ENCODE measurements at regions of chr16 and their contacts with region 1.

Region 1: DNA sequence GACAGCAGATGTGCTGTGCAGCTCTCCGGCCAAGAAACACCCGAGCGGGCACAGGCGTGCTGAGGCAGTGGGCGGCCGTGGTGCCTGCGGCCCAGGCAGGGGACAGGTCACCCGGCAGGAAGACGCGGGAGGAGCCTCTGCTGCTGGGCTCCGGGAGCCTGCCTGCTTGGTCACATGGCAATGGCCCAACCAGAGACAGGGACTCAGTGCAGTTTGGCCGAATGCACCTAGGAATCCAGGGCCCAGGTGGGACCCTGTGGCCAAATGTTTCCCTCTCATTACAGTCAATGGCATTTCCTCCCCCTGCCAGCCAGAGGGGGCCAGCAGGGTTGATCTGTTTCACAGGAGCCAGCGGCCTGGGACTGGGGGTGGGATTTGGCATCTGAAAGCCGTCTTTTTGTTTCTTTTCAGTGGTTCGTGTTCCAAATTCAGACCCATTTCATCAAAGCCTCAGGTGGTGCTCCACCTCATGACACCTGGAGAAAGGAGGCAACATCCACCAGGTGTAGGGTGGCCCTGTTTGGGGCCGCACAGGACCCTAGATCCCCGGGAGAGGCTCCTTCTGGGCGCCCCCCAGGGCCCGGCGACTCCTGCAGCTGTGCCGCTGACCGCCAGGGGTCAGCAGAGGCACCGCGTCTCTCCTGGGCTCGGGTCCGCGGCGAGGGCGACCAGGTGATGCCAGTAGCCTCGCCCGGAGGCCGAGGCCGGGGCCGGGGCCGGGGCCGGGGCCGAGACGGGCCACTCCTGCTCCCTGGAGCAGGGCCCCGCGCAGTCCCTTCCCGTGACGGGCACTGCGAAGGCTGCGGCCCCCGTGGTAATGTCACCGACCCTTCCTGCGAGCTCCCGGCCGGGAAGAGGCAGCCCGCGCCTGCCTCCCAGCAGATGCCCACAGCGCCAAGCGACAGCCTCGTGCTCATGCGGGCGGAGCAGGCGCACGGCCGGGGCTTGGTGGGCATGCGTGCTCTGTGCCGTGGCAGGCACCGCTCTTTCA is 118.5 kb downstream of the C16orf78 start:
- DNase-seq: peak; percentile 60 to 81 (median 81)
- ATAC-seq: peak; percentile 78 to 87
- H3K4me3 ChIP-seq: peak overlapping the region; percentile 27
- H3K27ac ChIP-seq: no peak overlapping the region
- H3K4me1 ChIP-seq: no peaks in the 10 kb centered on the region
- H3K27me3 ChIP-seq: no peaks in the 10 kb centered on the region

Region 2: GRCh38 chr16:49592546-49593423 is 100.7 kb after region 1 on chr16:
- intact Hi-C with region 1: loop called in 3 of 4 experiments (anchors 10 kb)
- DNase-seq: no peak
- ATAC-seq: peak in 1 of 2 donors; percentile 51
- H3K4me3 ChIP-seq: no peak overlapping the region
- H3K27ac ChIP-seq: no peak overlapping the region
- H3K4me1 ChIP-seq: peaks cover 2% of the 10 kb centered on the region
- H3K27me3 ChIP-seq: no peaks in the 10 kb centered on the region

Region 3: DNA sequence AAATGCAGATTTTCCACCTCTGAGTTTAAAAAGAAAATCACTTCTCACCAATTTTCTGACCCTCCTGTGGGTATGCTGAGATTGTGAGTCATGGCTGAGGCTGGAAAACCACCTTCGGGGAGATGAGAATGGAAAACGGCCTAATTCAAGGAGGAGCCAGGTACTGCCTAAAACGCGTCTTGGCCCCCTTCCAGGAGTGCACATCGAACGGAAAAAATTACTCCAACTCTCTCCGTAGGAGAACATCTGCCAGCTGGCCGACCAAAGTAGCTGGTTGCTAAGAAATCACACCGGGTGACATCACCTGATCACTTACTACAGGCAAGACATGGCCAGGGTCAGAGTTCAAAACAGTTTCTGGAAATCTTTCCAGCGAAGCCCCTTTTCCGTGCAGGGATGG is 256.3 kb after region 1 on chr16:
- intact Hi-C with region 1: loop called in 1 of 4 experiments (anchors 10 kb)
- DNase-seq: peak in 1 of 3 donors; percentile 53
- ATAC-seq: peak in 1 of 2 donors; percentile 53
- H3K4me3 ChIP-seq: no peak overlapping the region
- H3K27ac ChIP-seq: no peak overlapping the region
- H3K4me1 ChIP-seq: peaks cover 4% of the 10 kb centered on the region
- H3K27me3 ChIP-seq: no peaks in the 10 kb centered on the region

Region 4: GRCh38 chr16:49855280-49855821 is 363.3 kb after region 1 on chr16:
- intact Hi-C with region 1: loop called in 1 of 4 experiments (anchors 5 kb)
- DNase-seq: peak; percentile 90 to 96 (median 96)
- ATAC-seq: peak; percentile 78 to 82
- H3K4me3 ChIP-seq: peak overlapping the region; percentile 96
- H3K27ac ChIP-seq: peak overlapping the region; percentile 97
- H3K4me1 ChIP-seq: no peaks in the 10 kb centered on the region
- H3K27me3 ChIP-seq: no peaks in the 10 kb centered on the region

Region 5: GRCh38 chr16:49876716-49877129 is 384.7 kb after region 1 on chr16:
- intact Hi-C with region 1: loop called in 1 of 4 experiments (anchors 10 kb)
- DNase-seq: peak; percentile 84 to 94 (median 91)
- ATAC-seq: peak; percentile 93 to 97
- H3K4me3 ChIP-seq: peak overlapping the region; percentile 56
- H3K27ac ChIP-seq: no peak overlapping the region
- H3K4me1 ChIP-seq: no peaks in the 10 kb centered on the region
- H3K27me3 ChIP-seq: no peaks in the 10 kb centered on the region

Region 6: DNA sequence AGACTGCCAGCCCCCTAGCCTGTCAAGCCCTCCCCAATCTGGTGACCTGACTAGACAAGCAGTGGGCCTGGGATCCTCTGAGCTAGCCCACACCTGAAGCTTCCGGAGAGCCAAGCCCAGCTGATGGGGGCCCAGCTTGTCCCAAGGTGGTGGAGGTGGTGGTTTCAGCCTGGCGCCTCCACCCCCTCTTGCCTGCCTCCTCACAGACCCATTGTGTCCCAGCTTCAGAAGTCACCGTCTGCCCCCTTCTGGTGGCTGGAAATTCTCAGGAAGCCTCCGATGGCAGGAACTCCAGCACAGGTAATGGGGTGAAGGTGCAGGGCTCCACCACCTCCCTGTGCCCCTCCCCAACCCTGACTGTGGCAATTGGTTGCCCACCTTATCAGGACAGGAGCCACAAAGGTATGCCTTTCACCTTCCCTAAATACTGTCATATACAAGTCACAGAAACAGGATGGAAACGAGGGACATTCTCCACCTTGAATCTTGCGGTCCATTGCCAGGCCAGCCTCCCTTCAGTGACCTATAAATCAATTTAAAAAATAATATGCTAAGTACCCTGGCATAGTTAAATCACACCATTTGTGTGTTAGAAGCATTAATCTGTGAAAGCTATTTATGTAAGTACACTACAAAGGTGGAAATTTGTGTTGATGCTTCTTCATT is 429.9 kb after region 1 on chr16:
- intact Hi-C with region 1: loop called in 1 of 4 experiments (anchors 5 kb)
- DNase-seq: peak; percentile 59 to 87 (median 70)
- ATAC-seq: peak; percentile 80 to 81
- H3K4me3 ChIP-seq: no peak overlapping the region
- H3K27ac ChIP-seq: no peak overlapping the region
- H3K4me1 ChIP-seq: no peaks in the 10 kb centered on the region
- H3K27me3 ChIP-seq: no peaks in the 10 kb centered on the region